CD8-positive, alpha-beta T cell (primary cell): ENCODE measurements at regions of chr17 and their contacts with region 1.

Region 1: DNA sequence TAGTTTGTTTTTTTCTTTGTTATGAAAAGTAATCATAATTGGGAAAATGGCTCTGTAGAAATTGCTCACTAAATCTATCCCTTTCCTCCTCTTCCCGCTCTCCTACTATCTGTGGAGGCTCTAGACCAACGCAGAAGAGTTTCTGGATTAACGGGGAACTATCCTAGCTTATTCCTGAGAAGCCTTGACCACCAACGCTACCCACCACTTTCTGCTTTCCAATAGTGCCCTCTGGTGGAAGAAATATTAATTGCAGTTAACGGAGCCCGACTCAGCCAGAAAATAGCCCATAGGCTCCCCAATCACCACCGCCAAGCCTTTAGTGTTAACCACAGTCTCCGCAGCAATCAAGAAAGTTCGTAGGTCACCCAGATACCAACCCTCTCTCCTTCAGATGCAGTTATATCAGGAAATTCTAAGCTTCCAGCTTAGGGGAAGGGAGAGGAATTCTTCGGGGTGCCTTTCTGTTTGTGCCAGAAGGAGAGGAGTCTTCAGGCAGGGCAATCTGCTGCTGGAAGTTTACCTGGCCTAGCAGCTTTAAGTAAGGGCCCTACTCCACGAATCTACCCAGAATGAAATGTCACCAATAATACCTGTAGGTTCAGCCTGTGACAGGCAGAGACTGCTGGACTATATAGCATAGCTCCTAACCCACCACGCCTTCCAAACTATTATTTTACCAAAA is 23.0 kb upstream of the NSRP1 start:
- DNase-seq: peak in 7 of 9 experiments; percentile 14 to 71 (median 51)
- ATAC-seq: peak; percentile 52
- H3K4me3 ChIP-seq: no peak overlapping the region
- H3K4me3 Mint-ChIP-seq: no peak overlapping the region
- H3K27ac ChIP-seq: no peak overlapping the region
- H3K27ac Mint-ChIP-seq: no peak overlapping the region
- H3K4me1 ChIP-seq: no peaks in the 10 kb centered on the region
- H3K4me1 Mint-ChIP-seq: peaks cover 4% of the 10 kb centered on the region
- H3K27me3 ChIP-seq: no peaks in the 10 kb centered on the region
- H3K27me3 Mint-ChIP-seq: peaks cover 14% of the 10 kb centered on the region
- CTCF ChIP-seq: peak; percentile 93

Region 2: GRCh38 chr17:29579866-29580771 is 513.5 kb before region 1 on chr17:
- CTCF ChIA-PET with region 1: no interaction called
- POLR2A ChIA-PET with region 1: no interaction called
- intact Hi-C with region 1: loop called (anchors 1 to 10 kb)
- DNase-seq: peak; percentile 81 to 95 (median 92)
- ATAC-seq: peak; percentile 99
- H3K4me3 ChIP-seq: no peak overlapping the region
- H3K4me3 Mint-ChIP-seq: no peak overlapping the region
- H3K27ac ChIP-seq: no peak overlapping the region
- H3K27ac Mint-ChIP-seq: peak overlapping the region; percentile 34
- H3K4me1 ChIP-seq: peaks cover 13% of the 10 kb centered on the region
- H3K4me1 Mint-ChIP-seq: peaks cover 11% of the 10 kb centered on the region
- H3K27me3 ChIP-seq: no peaks in the 10 kb centered on the region
- H3K27me3 Mint-ChIP-seq: no peaks in the 10 kb centered on the region
- CTCF ChIP-seq: peak; percentile 80

Region 3: GRCh38 chr17:29807520-29808351 is 285.9 kb before region 1 on chr17:
- CTCF ChIA-PET with region 1: interaction called, 6 read pairs
- POLR2A ChIA-PET with region 1: no interaction called
- intact Hi-C with region 1: loop called (anchors 1 kb)
- DNase-seq: peak; percentile 30 to 81 (median 73)
- ATAC-seq: peak; percentile 81
- H3K4me3 ChIP-seq: no peak overlapping the region
- H3K4me3 Mint-ChIP-seq: no peak overlapping the region
- H3K27ac ChIP-seq: no peak overlapping the region
- H3K27ac Mint-ChIP-seq: no peak overlapping the region
- H3K4me1 ChIP-seq: no peaks in the 10 kb centered on the region
- H3K4me1 Mint-ChIP-seq: peaks cover 15% of the 10 kb centered on the region
- H3K27me3 ChIP-seq: no peaks in the 10 kb centered on the region
- H3K27me3 Mint-ChIP-seq: no peaks in the 10 kb centered on the region
- CTCF ChIP-seq: peak; percentile 94

Region 4: DNA sequence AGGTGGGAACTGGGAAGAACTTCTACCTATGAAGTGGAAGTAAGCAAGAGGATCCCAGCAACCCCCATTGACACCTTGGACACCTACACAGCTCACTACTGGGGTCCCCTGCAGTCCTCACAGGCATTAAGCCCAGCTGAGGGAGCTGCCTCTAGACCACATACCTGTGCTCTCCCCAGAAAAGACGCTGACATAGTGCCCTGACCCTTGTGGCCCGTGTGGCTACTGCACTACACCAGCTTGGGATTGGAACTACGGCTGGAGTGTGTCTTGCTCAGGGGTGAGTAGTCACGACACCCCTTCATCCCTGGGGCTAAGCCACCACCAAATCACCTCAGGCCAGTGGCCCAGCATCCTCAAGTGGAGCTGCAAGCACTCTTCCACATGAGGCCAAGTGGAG is 31.2 kb before region 1 on chr17:
- CTCF ChIA-PET with region 1: interaction called, 13 read pairs
- POLR2A ChIA-PET with region 1: no interaction called
- intact Hi-C with region 1: no loop called
- DNase-seq: no peak
- ATAC-seq: no peak
- H3K4me3 ChIP-seq: no peak overlapping the region
- H3K4me3 Mint-ChIP-seq: no peak overlapping the region
- H3K27ac ChIP-seq: no peak overlapping the region
- H3K27ac Mint-ChIP-seq: no peak overlapping the region
- H3K4me1 ChIP-seq: no peaks in the 10 kb centered on the region
- H3K4me1 Mint-ChIP-seq: no peaks in the 10 kb centered on the region
- H3K27me3 ChIP-seq: peaks cover 0 to 4% of the 10 kb centered on the region in 2 experiments
- H3K27me3 Mint-ChIP-seq: peaks cover 9% of the 10 kb centered on the region
- CTCF ChIP-seq: no peak

Region 5: DNA sequence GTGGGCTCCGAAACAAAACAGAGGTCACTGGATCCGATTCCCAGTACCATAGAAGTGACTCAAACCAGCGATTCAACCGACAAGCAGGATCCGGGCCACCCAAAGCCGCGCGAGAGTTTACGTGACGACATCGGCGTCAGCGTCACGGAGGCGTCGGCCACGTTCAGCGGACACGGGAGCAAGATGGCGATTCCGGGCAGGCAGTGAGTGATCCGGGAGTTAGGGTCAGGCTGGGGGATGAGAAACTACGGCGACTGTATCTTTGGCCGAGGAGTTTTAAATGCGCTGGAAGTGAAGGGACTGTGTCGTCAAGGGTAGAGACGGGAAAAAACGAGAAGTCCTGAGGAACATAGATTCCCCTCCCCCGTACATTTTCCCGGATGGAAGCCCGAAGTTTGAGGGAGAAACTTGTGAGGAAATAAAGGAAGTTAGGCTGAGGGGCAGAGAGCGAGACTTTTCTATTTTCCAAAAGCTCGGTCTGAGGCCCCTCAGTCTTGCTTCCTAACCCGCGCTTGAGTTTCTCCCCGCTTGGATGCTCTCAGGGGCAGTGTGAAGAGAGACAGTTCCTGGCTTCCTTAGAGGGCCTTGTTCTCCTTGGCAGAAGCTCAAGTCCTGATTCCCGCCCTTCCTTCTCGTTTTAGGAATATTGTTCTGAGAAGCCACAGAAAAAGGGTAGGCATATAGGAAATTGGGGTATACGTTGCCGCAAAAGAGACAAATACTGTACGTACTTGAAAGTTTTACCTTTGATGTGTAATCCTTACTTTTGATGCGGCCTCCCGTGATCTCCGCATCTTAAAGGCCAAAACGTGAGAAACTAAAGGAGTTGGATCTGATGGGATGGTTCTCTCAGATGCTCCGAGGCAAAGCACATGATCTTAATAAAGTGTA is 23.3 kb after region 1 on chr17 and contains the start of gene NSRP1:
- CTCF ChIA-PET with region 1: interaction called, 20 read pairs
- POLR2A ChIA-PET with region 1: no interaction called
- intact Hi-C with region 1: no loop called
- DNase-seq: peak; percentile 83 to 96 (median 92)
- ATAC-seq: peak; percentile 97
- H3K4me3 ChIP-seq: peak within 1 kb of the TSS; percentile 66 to 96
- H3K4me3 Mint-ChIP-seq: peak within 1 kb of the TSS; percentile 100
- H3K27ac ChIP-seq: peak within 1 kb of the TSS; percentile 95 to 99
- H3K27ac Mint-ChIP-seq: peak within 1 kb of the TSS; percentile 100
- H3K4me1 ChIP-seq: peaks cover 16% of the 10 kb centered on the region
- H3K4me1 Mint-ChIP-seq: peaks cover 41% of the 10 kb centered on the region
- H3K27me3 ChIP-seq: no peaks in the 10 kb centered on the region
- H3K27me3 Mint-ChIP-seq: no peaks in the 10 kb centered on the region
- CTCF ChIP-seq: no peak
- total RNA-seq, gene NSRP1: 22.4 to 23.1 TPM